ENCODE measurements at regions of chr3 and their contacts with region 1.

Region 1: GRCh38 chr3:186617038-186617946 is 4.4 kb downstream of the AHSG start:
- DNase-seq: peak; percentile 91
- ATAC-seq: peak; percentile 95

Region 2: GRCh38 chr3:186502138-186502948 is 114.9 kb before region 1 on chr3:
- intact Hi-C with region 1: no loop called
- DNase-seq: no peak
- ATAC-seq: peak; percentile 34

Region 3: DNA sequence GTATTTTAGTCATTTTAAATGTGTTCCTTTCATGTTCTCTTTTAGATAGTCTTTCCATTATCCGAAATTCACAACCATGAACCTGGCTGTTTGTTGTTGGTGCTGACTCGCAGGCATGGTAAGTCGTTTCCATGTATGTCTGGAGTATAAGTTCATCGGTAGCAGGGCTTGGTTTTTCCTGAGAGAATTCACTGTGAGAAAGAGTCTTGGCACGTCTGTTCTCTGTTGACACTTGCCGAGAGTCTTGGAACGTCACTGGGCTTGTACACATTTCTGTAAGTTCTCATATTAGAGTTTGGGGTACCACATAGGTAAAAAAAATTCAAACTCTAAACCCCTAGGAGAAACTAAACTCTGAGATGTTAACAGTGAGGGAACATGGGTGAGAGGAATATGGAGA is 136.7 kb after region 1 on chr3:
- intact Hi-C with region 1: loop called (anchors 1 kb)
- DNase-seq: no peak
- ATAC-seq: no peak

Region 4: DNA sequence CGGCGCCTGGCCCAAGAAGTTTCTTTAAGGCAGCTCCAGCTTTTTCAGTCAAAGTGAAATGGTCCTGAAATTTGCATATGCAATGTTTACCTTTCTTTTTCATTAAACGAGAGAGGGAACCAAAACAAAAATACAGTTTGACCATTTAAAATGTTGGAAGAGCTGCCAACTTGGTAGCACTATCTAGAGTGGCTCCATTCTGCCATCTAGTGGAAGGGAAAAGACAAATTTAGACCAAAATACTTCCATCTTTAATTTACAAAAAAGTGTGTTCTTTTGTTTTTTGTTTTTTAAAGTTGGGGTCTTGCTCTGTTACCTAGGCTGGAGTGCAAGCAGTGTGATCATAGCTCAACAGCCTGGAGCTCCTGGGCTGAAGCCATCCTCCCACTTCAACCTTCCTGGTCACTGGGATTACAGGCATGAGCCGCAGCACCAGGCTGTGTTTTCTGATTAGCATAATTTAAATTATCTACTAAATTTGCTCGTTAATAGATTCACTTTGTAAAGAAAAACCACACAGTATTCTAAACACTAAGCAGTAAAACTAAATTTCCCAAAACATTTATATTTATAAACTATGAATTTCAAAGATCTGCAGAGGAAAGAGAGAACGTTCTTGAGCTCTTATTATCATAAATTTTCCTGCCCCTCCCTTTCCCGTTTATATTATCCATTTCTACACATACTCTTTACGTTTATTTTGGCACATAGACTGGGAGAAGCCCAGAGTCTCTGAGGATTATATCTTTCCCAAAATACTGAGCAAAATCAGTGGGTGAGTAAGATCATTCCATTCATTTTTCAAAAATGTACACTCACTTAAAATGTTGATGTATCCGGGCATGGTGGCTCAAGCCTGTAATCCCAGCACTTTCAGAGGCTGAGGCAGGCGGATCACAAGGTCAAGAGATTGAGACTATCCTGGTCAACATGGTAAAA is 204.4 kb after region 1 on chr3:
- intact Hi-C with region 1: loop called (anchors 5 kb)
- DNase-seq: no peak
- ATAC-seq: no peak

Region 5: GRCh38 chr3:186839874-186840641 is 222.8 kb after region 1 on chr3:
- intact Hi-C with region 1: no loop called
- DNase-seq: no peak
- ATAC-seq: no peak

Region 6: GRCh38 chr3:186871403-186871924 is 254.2 kb after region 1 on chr3:
- intact Hi-C with region 1: no loop called
- DNase-seq: no peak
- ATAC-seq: no peak